ENCODE measurements at regions of chr9 and their contacts with region 1.

Region 1: DNA sequence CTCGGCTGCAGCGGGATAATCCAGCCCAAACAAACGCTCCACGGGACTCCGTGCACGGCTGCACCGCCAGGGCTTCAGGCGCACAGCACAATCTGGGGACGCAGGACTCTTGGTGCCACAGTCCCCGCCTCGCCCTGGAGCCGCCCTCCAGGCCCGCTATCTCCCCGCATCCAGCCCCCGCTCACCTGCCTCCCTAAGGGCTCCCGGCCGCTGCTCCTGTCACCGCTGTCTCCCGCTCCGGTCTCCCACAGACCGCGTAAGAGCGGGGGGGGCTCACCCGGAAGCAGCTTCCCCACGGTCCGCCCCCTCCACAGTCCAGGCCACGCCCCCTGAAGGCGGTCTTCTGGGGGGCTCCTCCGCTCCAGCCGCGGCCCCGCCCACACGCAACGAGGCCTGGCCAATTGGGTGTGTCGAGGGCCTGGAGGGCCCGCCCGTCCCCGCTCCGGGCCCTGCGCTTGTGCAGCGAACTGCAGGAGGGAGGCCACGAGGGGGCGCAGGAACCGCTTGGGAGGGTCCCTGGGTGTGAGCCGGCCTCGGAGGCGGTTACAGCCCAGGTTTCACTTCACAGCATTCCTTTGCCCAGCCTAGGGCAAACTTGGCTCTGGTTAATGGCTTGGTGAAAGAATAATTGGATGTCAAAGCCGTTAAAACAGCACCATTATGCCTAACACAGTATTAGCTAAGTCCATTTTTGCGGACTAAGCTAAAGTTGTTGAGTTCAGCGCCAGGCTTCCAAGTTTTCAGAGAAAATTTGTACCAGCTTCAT is at the start of gene ALAD:
- DNase-seq: peak; percentile 97 to 99 (median 97)
- H3K4me3 ChIP-seq: peak within 1 kb of the TSS; percentile 79 to 96 (median 84)
- H3K4me3 Mint-ChIP-seq: peak within 1 kb of the TSS; percentile 87 to 93
- H3K27ac ChIP-seq: peak within 1 kb of the TSS; percentile 36 to 77
- H3K27ac Mint-ChIP-seq: peak within 1 kb of the TSS; percentile 79 to 93 (median 87)
- H3K4me1 ChIP-seq: peaks cover 53 to 63% of the 10 kb centered on the region in 2 donors
- H3K4me1 Mint-ChIP-seq: peaks cover 63% of the 10 kb centered on the region
- H3K27me3 ChIP-seq: no peaks in the 10 kb centered on the region
- H3K27me3 Mint-ChIP-seq: peaks cover 0 to under 1% (median 0%) of the 10 kb centered on the region in 3 donors
- CTCF ChIP-seq: peak; percentile 95
- polyA plus RNA-seq, gene ALAD: 17.1 to 24.6 (median 20.9) TPM

Region 2: GRCh38 chr9:113340017-113340699 is 61.1 kb before region 1 on chr9 and contains the start of gene WDR31:
- intact Hi-C with region 1: loop called in 1 of 2 experiments (anchors 10 kb)
- DNase-seq: peak; percentile 67 to 76 (median 70)
- H3K4me3 ChIP-seq: peak within 1 kb of the TSS; percentile 64 to 91 (median 87)
- H3K4me3 Mint-ChIP-seq: peak within 1 kb of the TSS; percentile 79 to 97
- H3K27ac ChIP-seq: peak within 1 kb of the TSS in 1 of 2 donors; percentile 17
- H3K27ac Mint-ChIP-seq: peak within 1 kb of the TSS in 5 of 7 donors; percentile 21 to 76 (median 26)
- H3K4me1 ChIP-seq: peaks cover 10 to 16% of the 10 kb centered on the region in 2 donors
- H3K4me1 Mint-ChIP-seq: peaks cover 20% of the 10 kb centered on the region
- H3K27me3 ChIP-seq: no peaks in the 10 kb centered on the region
- H3K27me3 Mint-ChIP-seq: peaks cover 2 to 7% (median 4%) of the 10 kb centered on the region in 3 donors
- CTCF ChIP-seq: no peak
- polyA plus RNA-seq, gene WDR31: 0.05 to 0.11 TPM in 2 of 3 donors, not detected in the other

Region 3: GRCh38 chr9:113380869-113381378 is 20.3 kb before region 1 on chr9:
- intact Hi-C with region 1: no loop called
- DNase-seq: no peak
- H3K4me3 ChIP-seq: no peak overlapping the region
- H3K4me3 Mint-ChIP-seq: no peak overlapping the region
- H3K27ac ChIP-seq: no peak overlapping the region
- H3K27ac Mint-ChIP-seq: no peak overlapping the region
- H3K4me1 ChIP-seq: peaks cover 9 to 20% of the 10 kb centered on the region in 2 donors
- H3K4me1 Mint-ChIP-seq: peaks cover 21% of the 10 kb centered on the region
- H3K27me3 ChIP-seq: no peaks in the 10 kb centered on the region
- H3K27me3 Mint-ChIP-seq: peaks cover 0 to 3% (median 2%) of the 10 kb centered on the region in 3 donors
- CTCF ChIP-seq: no peak

Region 4: DNA sequence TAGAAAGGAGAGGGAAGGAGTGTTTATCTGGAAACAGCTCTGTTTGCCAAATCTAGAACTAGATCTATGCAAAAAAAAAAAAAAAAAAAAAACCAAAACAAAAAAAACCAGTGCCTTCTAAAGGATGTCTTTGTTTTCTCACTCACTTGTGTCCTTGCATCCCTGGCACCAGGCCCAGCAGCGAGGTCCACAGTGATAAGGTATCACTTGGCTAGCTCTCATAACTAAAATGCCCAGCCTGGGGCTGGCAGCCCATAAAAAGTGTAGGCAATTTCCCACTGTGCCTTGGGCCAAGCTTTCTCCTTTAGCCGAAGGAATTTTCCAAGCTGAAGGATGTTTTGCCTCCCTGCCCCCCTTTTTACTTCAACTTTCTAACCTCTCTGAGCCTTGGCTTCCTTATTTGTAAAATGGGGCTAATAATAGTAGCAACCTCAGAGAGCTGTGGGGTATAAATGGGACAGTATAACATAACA is 83.1 kb after region 1 on chr9:
- intact Hi-C with region 1: no loop called
- DNase-seq: no peak
- H3K4me3 ChIP-seq: no peak overlapping the region
- H3K4me3 Mint-ChIP-seq: no peak overlapping the region
- H3K27ac ChIP-seq: no peak overlapping the region
- H3K27ac Mint-ChIP-seq: no peak overlapping the region
- H3K4me1 ChIP-seq: no peaks in the 10 kb centered on the region
- H3K4me1 Mint-ChIP-seq: peaks cover 5% of the 10 kb centered on the region
- H3K27me3 ChIP-seq: no peaks in the 10 kb centered on the region
- H3K27me3 Mint-ChIP-seq: peaks cover 0 to 1% (median 0%) of the 10 kb centered on the region in 3 donors
- CTCF ChIP-seq: no peak

Measured in CD14-positive monocyte (primary cell).